ENCODE measurements at regions of chr17 and their contacts with region 1.

Region 1: GRCh38 chr17:50487213-50488096 is 8.8 kb downstream of the RSAD1 start:
- DNase-seq: no peak
- ATAC-seq: peak in 2 of 4 donors; percentile 30 to 36
- H3K4me3 ChIP-seq: no peak overlapping the region
- H3K27ac ChIP-seq: no peak overlapping the region
- H3K4me1 ChIP-seq: peaks cover 4 to 6% (median 5%) of the 10 kb centered on the region in 3 donors
- H3K27me3 ChIP-seq: no peaks in the 10 kb centered on the region
- CTCF ChIP-seq: no peak

Region 2: DNA sequence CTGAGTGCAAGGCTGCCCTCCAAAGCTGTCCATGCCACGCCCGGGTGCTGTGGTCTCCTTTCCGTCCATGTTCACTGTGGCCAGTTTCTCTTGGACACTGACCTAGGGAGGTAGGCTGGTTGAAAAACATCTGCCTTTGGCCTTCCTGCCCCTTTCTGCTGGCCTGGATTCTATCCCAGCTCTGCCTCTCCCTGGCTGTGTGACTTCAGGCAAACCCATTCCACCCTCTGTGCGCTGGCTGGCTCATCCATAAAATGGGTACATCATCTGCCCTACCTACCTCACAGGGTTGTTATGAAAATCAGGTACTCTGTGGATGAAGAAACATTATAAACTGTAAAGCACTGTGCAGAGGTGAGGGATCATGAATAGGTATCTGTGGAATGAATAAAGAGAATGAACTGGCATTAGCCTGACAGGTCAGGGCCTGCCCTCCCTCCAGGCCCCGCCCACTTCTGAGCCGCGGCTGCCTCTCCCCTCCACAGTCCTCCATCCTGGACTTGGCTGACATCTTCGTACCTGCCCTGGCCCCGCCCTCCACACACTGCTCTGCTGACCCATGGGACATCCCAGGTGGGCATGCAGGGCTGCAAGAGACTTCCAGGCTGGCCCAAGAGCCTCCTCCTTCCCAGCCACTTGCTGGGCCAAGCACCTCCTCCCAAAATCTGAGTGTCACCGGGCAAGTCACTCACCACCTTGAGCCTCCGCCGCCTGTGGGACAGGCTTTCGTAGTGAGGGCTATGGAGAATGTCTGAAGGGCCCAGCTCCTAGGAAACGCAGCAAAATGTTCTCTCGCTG is 52.5 kb after region 1 on chr17:
- intact Hi-C with region 1: loop called (anchors 5 to 10 kb)
- DNase-seq: peak in 4 of 6 donors; percentile 22 to 79 (median 51)
- ATAC-seq: no peak
- H3K4me3 ChIP-seq: no peak overlapping the region
- H3K27ac ChIP-seq: no peak overlapping the region
- H3K4me1 ChIP-seq: peaks cover 18 to 34% (median 24%) of the 10 kb centered on the region in 3 donors
- H3K27me3 ChIP-seq: no peaks in the 10 kb centered on the region
- CTCF ChIP-seq: no peak

Measured in pancreas (tissue), 10 donors.